ENCODE measurements at regions of chr2 and their contacts with region 1.

Region 1: GRCh38 chr2:237581751-237582746 is 8.5 kb downstream of the RAB17 start:
- DNase-seq: peak; percentile 7
- H3K4me3 ChIP-seq: no peak overlapping the region
- CTCF ChIP-seq: peak; percentile 51

Region 2: GRCh38 chr2:237774802-237775553 is 192.9 kb after region 1 on chr2:
- CTCF ChIA-PET with region 1: interaction called, 26 read pairs
- POLR2A ChIA-PET with region 1: no interaction called
- DNase-seq: no peak
- H3K4me3 ChIP-seq: no peak overlapping the region
- CTCF ChIP-seq: peak; percentile 58

Measured in AG04449 (cell line).